Prostate gland (tissue), 2 donors: ENCODE measurements at regions of chr2 and their contacts with region 1.

Region 1: GRCh38 chr2:240560480-240561326 is 546 bp downstream of the DUSP28 start:
- DNase-seq: peak; percentile 99
- H3K4me3 ChIP-seq: peak overlapping the region; percentile 71 to 92
- H3K27ac ChIP-seq: peak overlapping the region; percentile 98 to 100
- H3K4me1 ChIP-seq: peaks cover 17% of the 10 kb centered on the region
- H3K27me3 ChIP-seq: no peaks in the 10 kb centered on the region
- CTCF ChIP-seq: peak in 3 of 4 experiments; percentile 37 to 79 (median 62)
- POLR2A ChIP-seq: peak; percentile 84

Region 2: GRCh38 chr2:240032406-240033329 is 528.0 kb before region 1 on chr2:
- intact Hi-C with region 1: no loop called
- DNase-seq: no peak
- H3K4me3 ChIP-seq: no peak overlapping the region
- H3K27ac ChIP-seq: no peak overlapping the region
- H3K4me1 ChIP-seq: no peaks in the 10 kb centered on the region
- H3K27me3 ChIP-seq: no peaks in the 10 kb centered on the region
- CTCF ChIP-seq: no peak
- POLR2A ChIP-seq: no peak

Region 3: DNA sequence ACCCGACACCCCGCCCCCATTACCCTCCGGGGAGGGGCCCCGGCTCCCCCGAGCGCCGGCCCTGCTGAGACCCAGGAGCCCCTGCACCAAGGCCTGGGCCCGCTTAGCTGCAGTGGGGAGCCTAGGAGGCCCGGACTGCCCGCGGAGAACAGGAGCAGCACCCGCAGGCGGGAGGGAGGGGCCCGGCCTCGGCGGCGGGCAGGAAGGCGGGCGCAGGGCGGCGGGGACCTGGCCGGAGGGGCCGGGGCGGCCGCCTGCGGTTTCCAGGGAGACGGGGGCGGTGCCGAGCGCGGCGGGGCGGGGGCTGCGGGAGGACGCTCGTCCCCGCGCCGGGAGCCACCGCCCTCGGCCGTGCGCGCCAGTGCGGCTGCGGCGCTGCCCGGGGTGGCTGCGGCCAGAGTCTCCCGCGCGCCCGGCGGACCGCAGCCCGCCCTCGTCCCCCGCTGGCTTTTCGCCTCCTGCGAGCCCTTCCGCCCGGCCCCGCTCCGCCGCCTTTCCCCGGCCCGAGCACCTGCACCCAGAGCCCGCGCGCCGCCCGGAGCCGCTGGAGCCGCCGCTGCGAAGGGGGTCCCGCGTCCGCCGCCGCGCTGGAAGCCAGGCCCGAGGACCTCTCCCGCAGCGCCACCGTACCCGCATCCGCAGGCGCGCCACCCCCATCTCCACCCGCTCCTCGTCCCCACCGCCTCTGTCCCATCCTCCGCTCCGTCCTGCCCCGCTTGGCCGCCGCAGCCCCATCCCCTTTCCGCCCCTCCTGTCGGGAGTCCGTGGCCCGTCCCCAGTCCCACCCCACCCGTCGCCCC is 108.0 kb before region 1 on chr2:
- intact Hi-C with region 1: loop called (anchors 10 kb)
- DNase-seq: peak; percentile 77
- H3K4me3 ChIP-seq: peak overlapping the region; percentile 65 to 74
- H3K27ac ChIP-seq: peak overlapping the region; percentile 81 to 82
- H3K4me1 ChIP-seq: peaks cover 35% of the 10 kb centered on the region
- H3K27me3 ChIP-seq: no peaks in the 10 kb centered on the region
- CTCF ChIP-seq: no peak
- POLR2A ChIP-seq: peak; percentile 63

Region 4: GRCh38 chr2:240586198-240586918 is 25.7 kb after region 1 on chr2 and contains the start of gene CAPN10:
- intact Hi-C with region 1: loop called (anchors 2 kb)
- DNase-seq: peak; percentile 99
- H3K4me3 ChIP-seq: peak within 1 kb of the TSS; percentile 91 to 92
- H3K27ac ChIP-seq: peak within 1 kb of the TSS; percentile 92 to 98
- H3K4me1 ChIP-seq: peaks cover 19% of the 10 kb centered on the region
- H3K27me3 ChIP-seq: no peaks in the 10 kb centered on the region
- CTCF ChIP-seq: peak in 1 of 4 experiments; percentile 19
- POLR2A ChIP-seq: peak; percentile 27
- total RNA-seq, gene CAPN10: 25.5 to 68.4 TPM